Sigmoid colon (tissue), 7 donors: ENCODE measurements at regions of chr9 and their contacts with region 1.

Region 1: GRCh38 chr9:69759421-69760277 is at the start of gene PTAR1:
- DNase-seq: peak; percentile 95
- H3K4me3 ChIP-seq: peak within 1 kb of the TSS; percentile 71 to 84 (median 80)
- H3K27ac ChIP-seq: peak within 1 kb of the TSS; percentile 93 to 96 (median 95)
- H3K4me1 ChIP-seq: peaks cover 0 to 37% (median 21%) of the 10 kb centered on the region in 4 donors
- H3K27me3 ChIP-seq: no peaks in the 10 kb centered on the region
- CTCF ChIP-seq: no peak
- EP300 ChIP-seq: peak in 1 of 4 donors; percentile 32
- POLR2A ChIP-seq: no peak
- total RNA-seq, gene PTAR1: 39.5 to 79.6 (median 74.9) TPM

Region 2: GRCh38 chr9:69672596-69673310 is 86.9 kb before region 1 on chr9:
- intact Hi-C with region 1: loop called (anchors 2 kb)
- DNase-seq: peak; percentile 92
- H3K4me3 ChIP-seq: peak overlapping the region; percentile 62 to 90 (median 82)
- H3K27ac ChIP-seq: peak overlapping the region; percentile 75 to 85 (median 81)
- H3K4me1 ChIP-seq: peaks cover 0 to 15% (median 8%) of the 10 kb centered on the region in 4 donors
- H3K27me3 ChIP-seq: no peaks in the 10 kb centered on the region
- CTCF ChIP-seq: peak; percentile 73 to 92 (median 90)
- EP300 ChIP-seq: no peak
- POLR2A ChIP-seq: no peak

Region 3: DNA sequence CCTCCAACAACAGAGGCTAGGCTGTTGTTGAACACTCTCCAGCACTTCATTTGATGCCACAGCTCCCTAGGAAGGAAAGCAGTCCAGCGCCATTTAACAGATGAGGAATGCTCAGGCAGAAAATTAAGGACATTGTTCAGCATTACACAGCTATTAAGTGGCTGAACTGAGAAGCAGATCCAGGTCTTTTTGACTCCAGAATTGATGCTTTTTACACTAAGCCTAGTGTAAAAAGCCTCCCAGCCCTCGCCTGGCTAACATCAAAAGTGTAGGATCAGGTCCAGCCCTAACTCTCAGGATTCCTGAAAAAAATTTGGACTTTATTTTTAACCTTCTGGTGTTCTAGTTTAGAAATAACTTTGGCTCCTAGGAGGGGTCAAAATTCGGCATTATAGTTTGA is 392.7 kb after region 1 on chr9:
- intact Hi-C with region 1: loop called (anchors 5 kb)
- DNase-seq: no peak
- H3K4me3 ChIP-seq: no peak overlapping the region
- H3K27ac ChIP-seq: peak overlapping the region; percentile 24 to 61 (median 37)
- H3K4me1 ChIP-seq: peaks cover 0 to 62% (median 43%) of the 10 kb centered on the region in 4 donors
- H3K27me3 ChIP-seq: no peaks in the 10 kb centered on the region
- CTCF ChIP-seq: no peak
- EP300 ChIP-seq: no peak
- POLR2A ChIP-seq: no peak